IMR-90 (cell line): ENCODE measurements at regions of chr7 and their contacts with region 1.

Region 1: GRCh38 chr7:103573479-103574058 is 127.6 kb upstream of the SLC26A5 start:
- DNase-seq: peak; percentile 59
- ATAC-seq: no peak
- H3K4me3 ChIP-seq: no peak overlapping the region
- H3K27ac ChIP-seq: no peak overlapping the region
- H3K4me1 ChIP-seq: peaks cover 14% of the 10 kb centered on the region
- H3K27me3 ChIP-seq: no peaks in the 10 kb centered on the region
- CTCF ChIP-seq: peak; percentile 66
- POLR2A ChIP-seq: no peak
- RAD21 ChIP-seq: peak; percentile 69

Region 2: GRCh38 chr7:103447073-103447951 is 126.3 kb before region 1 on chr7:
- CTCF ChIA-PET with region 1: no interaction called
- POLR2A ChIA-PET with region 1: no interaction called
- dilution Hi-C with region 1: no loop called
- in situ Hi-C with region 1: no loop called
- intact Hi-C with region 1: loop called (anchors 5 kb)
- DNase-seq: peak; percentile 62
- ATAC-seq: peak; percentile 90
- H3K4me3 ChIP-seq: no peak overlapping the region
- H3K27ac ChIP-seq: no peak overlapping the region
- H3K4me1 ChIP-seq: peaks cover 4% of the 10 kb centered on the region; the same call in 1 of the 2 replicates
- H3K27me3 ChIP-seq: peaks cover 27% of the 10 kb centered on the region
- CTCF ChIP-seq: peak; percentile 83
- POLR2A ChIP-seq: no peak
- RAD21 ChIP-seq: peak; percentile 81

Region 3: DNA sequence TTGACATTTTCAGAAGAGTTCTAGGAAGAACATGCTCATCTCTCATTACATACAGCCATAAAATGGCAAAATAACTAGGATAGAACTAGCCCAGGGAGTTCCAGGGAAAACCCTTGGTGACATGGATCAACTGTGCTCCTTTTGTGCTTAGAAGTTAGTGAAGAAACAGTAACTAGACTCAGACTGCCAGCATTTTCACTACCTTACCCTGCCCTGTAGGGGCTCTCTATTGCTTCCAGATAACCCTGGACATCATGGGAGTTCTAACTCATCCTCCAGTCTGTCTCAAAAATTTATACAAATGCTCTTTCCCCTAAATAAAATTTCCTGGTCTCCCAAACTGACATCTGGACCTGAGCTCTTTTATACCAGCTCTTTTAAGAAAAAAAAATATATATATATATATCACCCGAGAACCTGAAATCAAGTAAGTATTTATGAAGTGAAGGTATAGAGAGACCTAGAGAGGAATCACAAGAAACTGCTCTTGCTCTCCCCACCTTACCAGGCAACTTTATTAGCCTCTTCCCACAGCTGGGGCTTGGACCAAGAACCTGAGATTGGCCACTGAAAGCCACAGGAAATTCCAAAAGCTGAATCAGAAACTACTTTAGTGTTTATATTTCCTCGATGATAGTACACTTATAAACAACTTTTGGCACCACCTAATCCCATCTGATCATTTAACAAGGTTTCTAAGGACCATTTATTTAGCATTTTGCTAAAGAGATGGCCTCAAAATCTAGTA is 314.5 kb after region 1 on chr7:
- CTCF ChIA-PET with region 1: no interaction called
- POLR2A ChIA-PET with region 1: no interaction called
- dilution Hi-C with region 1: no loop called
- in situ Hi-C with region 1: no loop called
- intact Hi-C with region 1: loop called (anchors 10 kb)
- DNase-seq: peak; percentile 57
- ATAC-seq: peak; percentile 79
- H3K4me3 ChIP-seq: no peak overlapping the region
- H3K27ac ChIP-seq: no peak overlapping the region
- H3K4me1 ChIP-seq: peaks cover 2% of the 10 kb centered on the region; the same call in 1 of the 2 replicates
- H3K27me3 ChIP-seq: no peaks in the 10 kb centered on the region
- CTCF ChIP-seq: 0 out of 2 replicates have a peak, but pooled peaks have one; percentile 3
- POLR2A ChIP-seq: no peak
- RAD21 ChIP-seq: no peak

Region 4: DNA sequence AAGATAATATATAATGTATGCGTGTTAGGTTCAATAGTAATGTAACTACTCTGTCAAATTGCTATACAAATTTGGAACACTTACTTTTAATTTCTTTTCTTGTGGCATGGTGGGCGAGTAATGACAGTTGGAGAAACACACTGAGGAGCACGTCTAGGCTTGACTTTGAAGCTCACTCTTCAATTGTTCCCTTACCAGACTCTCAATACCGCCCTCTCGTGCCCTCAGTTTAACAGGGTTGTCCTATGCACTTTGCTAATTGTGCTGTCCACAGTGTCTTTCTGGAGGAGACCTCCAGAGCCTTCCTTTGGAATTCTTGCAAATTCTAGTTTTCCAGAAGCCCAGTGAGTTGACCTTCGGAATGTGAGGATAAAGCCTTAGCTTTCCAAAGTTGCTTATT is 523.1 kb after region 1 on chr7:
- CTCF ChIA-PET with region 1: interaction called, 4 read pairs
- POLR2A ChIA-PET with region 1: no interaction called
- dilution Hi-C with region 1: no loop called
- in situ Hi-C with region 1: no loop called
- intact Hi-C with region 1: loop called (anchors 2 kb)
- DNase-seq: peak; percentile 18
- ATAC-seq: peak; percentile 66
- H3K4me3 ChIP-seq: no peak overlapping the region
- H3K27ac ChIP-seq: no peak overlapping the region
- H3K4me1 ChIP-seq: no peaks in the 10 kb centered on the region
- H3K27me3 ChIP-seq: peaks cover 3% of the 10 kb centered on the region; the same call in 1 of the 2 replicates
- CTCF ChIP-seq: peak; percentile 33
- POLR2A ChIP-seq: no peak
- RAD21 ChIP-seq: peak; percentile 27; the same call in 1 of the 2 replicates

Region 5: DNA sequence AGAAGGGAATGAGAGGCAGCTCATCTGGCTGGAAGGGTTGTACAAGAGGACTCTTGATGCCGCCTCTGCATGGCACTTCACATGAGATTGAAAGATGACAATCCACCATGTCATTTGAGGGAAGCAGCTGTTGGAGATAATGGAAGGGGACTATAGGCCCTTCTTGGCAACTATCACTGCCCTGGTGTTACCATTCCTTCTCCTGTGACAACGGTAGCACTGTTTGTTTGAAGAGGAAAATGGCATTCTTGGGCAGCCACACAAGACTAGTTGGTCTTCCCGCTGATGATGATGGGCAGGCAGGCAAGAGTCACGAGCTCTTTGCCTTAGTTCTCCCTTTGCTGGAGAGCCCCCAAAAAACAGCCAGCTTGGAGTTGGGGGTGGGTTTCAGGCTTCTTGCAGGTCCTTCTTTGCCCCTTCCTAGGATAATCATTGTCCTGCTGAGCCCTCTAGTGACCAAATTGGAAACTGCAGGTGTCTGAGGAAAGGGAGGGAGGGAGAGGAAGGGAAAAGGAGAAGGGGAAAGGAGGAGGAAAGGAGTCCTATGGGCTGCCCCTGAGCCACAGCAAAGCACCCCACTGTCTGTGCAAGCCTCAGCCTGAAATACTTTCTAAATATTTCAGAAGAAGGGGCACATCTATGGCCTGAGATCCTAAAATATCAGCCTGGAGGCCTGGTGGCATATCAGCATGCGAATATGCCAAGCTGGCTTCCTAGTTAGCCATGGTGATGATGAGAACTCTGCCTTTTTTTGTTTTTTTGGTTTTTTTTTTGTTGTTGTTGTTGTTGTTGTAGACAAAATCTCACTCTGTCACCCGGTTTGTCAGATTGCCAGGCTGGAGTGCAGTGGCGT is 1274.8 kb after region 1 on chr7:
- CTCF ChIA-PET with region 1: no interaction called
- POLR2A ChIA-PET with region 1: no interaction called
- dilution Hi-C with region 1: no loop called
- in situ Hi-C with region 1: no loop called
- intact Hi-C with region 1: loop called (anchors 10 kb)
- DNase-seq: peak; percentile 34
- ATAC-seq: peak; percentile 95
- H3K4me3 ChIP-seq: no peak overlapping the region
- H3K27ac ChIP-seq: no peak overlapping the region
- H3K4me1 ChIP-seq: no peaks in the 10 kb centered on the region
- H3K27me3 ChIP-seq: peaks cover 32% of the 10 kb centered on the region
- CTCF ChIP-seq: peak; percentile 68
- POLR2A ChIP-seq: no peak
- RAD21 ChIP-seq: peak; percentile 60